ENCODE measurements at regions of chr2 and their contacts with region 1.

Region 1: GRCh38 chr2:64021641-64022042 is 2.4 kb upstream of the VPS54 start:
- DNase-seq: no peak
- H3K4me3 Mint-ChIP-seq: peak overlapping the region; percentile 61
- H3K27ac Mint-ChIP-seq: peak overlapping the region; percentile 89
- H3K4me1 Mint-ChIP-seq: peaks cover 58% of the 10 kb centered on the region
- H3K27me3 Mint-ChIP-seq: no peaks in the 10 kb centered on the region

Region 2: GRCh38 chr2:63977904-63978303 is 43.7 kb before region 1 on chr2:
- CTCF ChIA-PET with region 1: no interaction called
- DNase-seq: peak; percentile 62
- H3K4me3 Mint-ChIP-seq: no peak overlapping the region
- H3K27ac Mint-ChIP-seq: peak overlapping the region; percentile 34
- H3K4me1 Mint-ChIP-seq: peaks cover 22% of the 10 kb centered on the region
- H3K27me3 Mint-ChIP-seq: no peaks in the 10 kb centered on the region

Region 3: GRCh38 chr2:64033920-64034319 is 12.3 kb after region 1 on chr2:
- CTCF ChIA-PET with region 1: interaction called, 14 read pairs
- DNase-seq: no peak
- H3K4me3 Mint-ChIP-seq: no peak overlapping the region
- H3K27ac Mint-ChIP-seq: no peak overlapping the region
- H3K4me1 Mint-ChIP-seq: peaks cover 39% of the 10 kb centered on the region
- H3K27me3 Mint-ChIP-seq: no peaks in the 10 kb centered on the region

Region 4: GRCh38 chr2:64052468-64053241 is 31.0 kb after region 1 on chr2:
- CTCF ChIA-PET with region 1: interaction called, 12 read pairs
- DNase-seq: peak; percentile 41
- H3K4me3 Mint-ChIP-seq: no peak overlapping the region
- H3K27ac Mint-ChIP-seq: no peak overlapping the region
- H3K4me1 Mint-ChIP-seq: peaks cover 48% of the 10 kb centered on the region
- H3K27me3 Mint-ChIP-seq: no peaks in the 10 kb centered on the region

Region 5: GRCh38 chr2:64114063-64114911 is 92.6 kb after region 1 on chr2:
- CTCF ChIA-PET with region 1: no interaction called
- DNase-seq: no peak
- H3K4me3 Mint-ChIP-seq: peak overlapping the region; percentile 2
- H3K27ac Mint-ChIP-seq: peak overlapping the region; percentile 82
- H3K4me1 Mint-ChIP-seq: peaks cover 61% of the 10 kb centered on the region
- H3K27me3 Mint-ChIP-seq: no peaks in the 10 kb centered on the region